HEK293 (cell line): ENCODE measurements at regions of chr11 and their contacts with region 1.

Region 1: DNA sequence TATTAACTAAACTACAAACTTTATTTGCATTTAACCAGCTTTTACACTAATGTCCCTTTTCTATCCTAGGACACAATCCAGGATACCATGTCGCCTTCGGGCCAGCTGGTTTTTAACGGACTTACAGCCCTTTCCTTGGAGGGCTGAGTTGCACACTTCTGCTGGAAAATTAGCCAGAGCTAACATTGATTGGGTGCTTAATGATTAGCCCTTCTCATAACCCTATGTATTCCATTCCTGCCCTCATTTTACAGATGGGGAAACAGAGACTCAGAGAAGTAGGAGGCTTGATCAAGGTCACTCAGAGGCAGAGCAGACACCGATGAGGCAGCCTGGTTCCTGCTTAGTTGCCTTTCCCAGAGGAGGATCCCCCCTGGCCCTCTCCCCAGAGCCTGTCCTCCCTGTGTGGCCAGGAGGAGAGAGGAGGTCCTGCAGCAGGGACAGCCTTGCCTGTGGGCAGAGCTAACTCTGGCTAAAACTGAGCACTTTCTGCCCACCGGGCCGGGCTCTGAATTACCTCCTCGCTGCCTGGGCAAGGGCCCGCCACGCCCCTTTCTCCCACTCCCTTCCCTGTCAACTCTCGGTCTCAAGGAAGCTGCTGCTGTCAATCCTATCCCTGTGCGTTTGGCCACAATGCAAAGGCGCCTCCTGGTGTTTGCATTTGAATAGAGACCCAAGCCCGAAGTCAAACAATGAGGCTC is 59.6 kb upstream of the PAX6 start:
- H3K4me3 ChIP-seq: peak overlapping the region; percentile 14
- H3K27ac ChIP-seq: no peak overlapping the region
- H3K4me1 ChIP-seq: 0 out of 2 replicates have a peak, but pooled peaks cover 3% of the 10 kb centered on the region
- CTCF ChIP-seq: 0 out of 2 replicates have a peak, but pooled peaks have one; percentile 9

Region 2: GRCh38 chr11:31240338-31240904 is 630.3 kb before region 1 on chr11:
- CTCF ChIA-PET with region 1: interaction called, 10 read pairs
- POLR2A ChIA-PET with region 1: no interaction called
- H3K4me3 ChIP-seq: no peak overlapping the region
- H3K27ac ChIP-seq: no peak overlapping the region
- H3K4me1 ChIP-seq: no peaks in the 10 kb centered on the region
- CTCF ChIP-seq: no peak

Region 3: GRCh38 chr11:31397239-31397834 is 473.4 kb before region 1 on chr11:
- CTCF ChIA-PET with region 1: interaction called, 22 read pairs
- POLR2A ChIA-PET with region 1: no interaction called
- H3K4me3 ChIP-seq: no peak overlapping the region
- H3K27ac ChIP-seq: no peak overlapping the region
- H3K4me1 ChIP-seq: no peaks in the 10 kb centered on the region
- CTCF ChIP-seq: peak; percentile 32; the same call in 1 of the 2 replicates